ENCODE measurements at regions of chr4 and their contacts with region 1.

Region 1: DNA sequence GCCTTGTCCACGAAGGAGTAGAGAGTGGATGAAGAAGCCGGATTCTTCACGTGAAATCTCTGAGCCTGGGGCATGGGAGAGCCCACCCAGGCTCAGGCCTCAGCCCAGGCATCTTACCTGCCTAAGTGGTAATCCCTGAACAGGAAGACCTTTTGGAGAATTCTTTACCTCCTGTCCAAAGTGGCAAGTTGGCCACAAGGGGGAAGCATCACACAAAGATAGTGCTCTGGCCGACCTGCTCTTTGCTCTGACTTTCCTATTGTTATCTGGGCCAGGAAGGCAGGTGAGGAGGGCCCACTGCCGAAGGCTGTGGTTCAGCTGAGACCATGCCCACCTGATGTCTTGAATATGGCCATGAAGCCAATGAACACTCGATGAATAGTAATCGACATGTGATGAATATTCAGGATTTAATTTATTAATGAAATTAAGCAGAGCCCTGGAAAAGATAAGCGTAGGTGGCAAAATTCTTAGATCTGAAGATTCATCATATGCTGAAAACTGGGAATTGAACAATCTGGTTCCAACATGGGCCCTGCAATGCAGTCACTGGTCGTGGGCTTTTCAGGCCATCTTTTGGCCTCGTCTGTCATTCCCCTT is 93.8 kb downstream of the PDGFRA start:
- DNase-seq: peak in 13 of 14 experiments; percentile 5 to 65 (median 35)
- ATAC-seq: peak; percentile 37
- H3K4me3 ChIP-seq: no peak overlapping the region
- H3K4me3 Mint-ChIP-seq: no peak overlapping the region
- H3K27ac ChIP-seq: no peak overlapping the region
- H3K27ac Mint-ChIP-seq: no peak overlapping the region
- H3K4me1 ChIP-seq: no peaks in the 10 kb centered on the region
- H3K4me1 Mint-ChIP-seq: no peaks in the 10 kb centered on the region
- H3K27me3 ChIP-seq: no peaks in the 10 kb centered on the region
- H3K27me3 Mint-ChIP-seq: no peaks in the 10 kb centered on the region
- CTCF ChIP-seq: peak; percentile 42

Region 2: GRCh38 chr4:55321707-55322264 is 998.9 kb after region 1 on chr4:
- CTCF ChIA-PET with region 1: no interaction called
- POLR2A ChIA-PET with region 1: no interaction called
- intact Hi-C with region 1: loop called (anchors 5 to 10 kb)
- DNase-seq: peak in 11 of 14 experiments; percentile 4 to 63 (median 14)
- ATAC-seq: no peak
- H3K4me3 ChIP-seq: no peak overlapping the region
- H3K4me3 Mint-ChIP-seq: no peak overlapping the region
- H3K27ac ChIP-seq: no peak overlapping the region
- H3K27ac Mint-ChIP-seq: no peak overlapping the region
- H3K4me1 ChIP-seq: peaks cover 3% of the 10 kb centered on the region
- H3K4me1 Mint-ChIP-seq: peaks cover 18% of the 10 kb centered on the region
- H3K27me3 ChIP-seq: peaks cover 0 to 4% of the 10 kb centered on the region in 2 experiments
- H3K27me3 Mint-ChIP-seq: no peaks in the 10 kb centered on the region
- CTCF ChIP-seq: no peak

Region 3: GRCh38 chr4:55736605-55737183 is 1413.8 kb after region 1 on chr4:
- CTCF ChIA-PET with region 1: no interaction called
- POLR2A ChIA-PET with region 1: no interaction called
- intact Hi-C with region 1: loop called (anchors 5 kb)
- DNase-seq: peak in 2 of 14 experiments; percentile 8 to 11
- ATAC-seq: no peak
- H3K4me3 ChIP-seq: no peak overlapping the region
- H3K4me3 Mint-ChIP-seq: no peak overlapping the region
- H3K27ac ChIP-seq: no peak overlapping the region
- H3K27ac Mint-ChIP-seq: no peak overlapping the region
- H3K4me1 ChIP-seq: no peaks in the 10 kb centered on the region
- H3K4me1 Mint-ChIP-seq: no peaks in the 10 kb centered on the region
- H3K27me3 ChIP-seq: peaks cover 0 to 11% of the 10 kb centered on the region in 2 experiments
- H3K27me3 Mint-ChIP-seq: peaks cover 54% of the 10 kb centered on the region
- CTCF ChIP-seq: no peak

Region 4: GRCh38 chr4:55866973-55867574 is 1544.2 kb after region 1 on chr4:
- CTCF ChIA-PET with region 1: no interaction called
- POLR2A ChIA-PET with region 1: no interaction called
- intact Hi-C with region 1: loop called in 1 of 2 experiments (anchors 5 kb)
- DNase-seq: peak in 6 of 14 experiments; percentile 9 to 74 (median 50)
- ATAC-seq: peak; percentile 91
- H3K4me3 ChIP-seq: no peak overlapping the region
- H3K4me3 Mint-ChIP-seq: no peak overlapping the region
- H3K27ac ChIP-seq: no peak overlapping the region
- H3K27ac Mint-ChIP-seq: no peak overlapping the region
- H3K4me1 ChIP-seq: no peaks in the 10 kb centered on the region
- H3K4me1 Mint-ChIP-seq: peaks cover 17% of the 10 kb centered on the region
- H3K27me3 ChIP-seq: no peaks in the 10 kb centered on the region
- H3K27me3 Mint-ChIP-seq: no peaks in the 10 kb centered on the region
- CTCF ChIP-seq: peak; percentile 99

Measured in CD4-positive, alpha-beta T cell (primary cell).